HepG2 (cell line): ENCODE measurements at regions of chr3 and their contacts with region 1.

Region 1: GRCh38 chr3:22089284-22089683 is 338.3 kb upstream of the ZNF385D start:
- DNase-seq: peak; percentile 23
- ATAC-seq: peak; percentile 70
- H3K4me3 ChIP-seq: no peak overlapping the region
- H3K27ac ChIP-seq: no peak overlapping the region
- H3K4me1 ChIP-seq: no peaks in the 10 kb centered on the region
- H3K27me3 ChIP-seq: no peaks in the 10 kb centered on the region
- CTCF ChIP-seq: peak; percentile 67
- EP300 ChIP-seq: no peak
- POLR2A ChIP-seq: no peak
- RAD21 ChIP-seq: peak; percentile 16; the same call in 1 of the 2 replicates

Region 2: GRCh38 chr3:21995079-21995607 is 94.1 kb before region 1 on chr3:
- CTCF ChIA-PET with region 1: no interaction called
- POLR2A ChIA-PET with region 1: no interaction called
- in situ Hi-C with region 1: no loop called
- intact Hi-C with region 1: no loop called
- DNase-seq: no peak
- ATAC-seq: no peak
- H3K4me3 ChIP-seq: no peak overlapping the region
- H3K27ac ChIP-seq: no peak overlapping the region
- H3K4me1 ChIP-seq: no peaks in the 10 kb centered on the region
- H3K27me3 ChIP-seq: no peaks in the 10 kb centered on the region
- CTCF ChIP-seq: no peak
- EP300 ChIP-seq: no peak
- POLR2A ChIP-seq: no peak
- RAD21 ChIP-seq: no peak

Region 3: DNA sequence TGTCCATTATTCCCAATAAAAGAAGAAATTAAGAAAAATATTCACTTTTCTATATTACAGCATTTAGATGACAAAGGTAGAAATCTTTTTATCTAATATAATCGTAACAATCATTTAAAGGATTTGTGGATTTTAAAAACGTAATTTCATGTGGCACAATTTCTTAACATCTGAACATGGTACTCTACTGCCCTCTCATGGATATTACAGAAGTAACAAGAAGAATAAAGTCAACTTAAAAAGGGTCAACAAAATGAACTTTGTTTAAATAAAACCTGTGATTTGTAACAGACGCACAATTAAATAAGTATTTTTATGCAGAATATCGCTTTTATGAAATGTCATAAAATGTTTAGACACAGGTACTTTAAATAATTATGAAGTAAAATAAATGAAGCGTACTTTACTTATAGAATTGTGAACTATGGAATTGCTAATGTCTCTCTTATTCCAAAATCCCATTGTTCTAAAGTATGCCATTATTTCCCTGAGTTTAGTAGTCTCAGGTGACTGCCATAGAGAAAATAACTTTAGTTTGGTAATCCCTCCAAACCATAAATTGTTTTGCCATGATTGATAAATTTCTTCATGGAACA is 28.6 kb after region 1 on chr3:
- CTCF ChIA-PET with region 1: interaction called, 5 read pairs
- POLR2A ChIA-PET with region 1: no interaction called
- in situ Hi-C with region 1: no loop called
- intact Hi-C with region 1: loop called (anchors 1 kb)
- DNase-seq: peak; percentile 34
- ATAC-seq: no peak
- H3K4me3 ChIP-seq: no peak overlapping the region
- H3K27ac ChIP-seq: no peak overlapping the region
- H3K4me1 ChIP-seq: peaks cover 26% of the 10 kb centered on the region
- H3K27me3 ChIP-seq: no peaks in the 10 kb centered on the region
- CTCF ChIP-seq: peak; percentile 55
- EP300 ChIP-seq: no peak
- POLR2A ChIP-seq: no peak
- RAD21 ChIP-seq: no peak

Region 4: GRCh38 chr3:22555753-22556435 is 466.6 kb after region 1 on chr3:
- CTCF ChIA-PET with region 1: no interaction called
- POLR2A ChIA-PET with region 1: no interaction called
- in situ Hi-C with region 1: no loop called
- intact Hi-C with region 1: loop called (anchors 5 kb)
- DNase-seq: no peak
- ATAC-seq: no peak
- H3K4me3 ChIP-seq: no peak overlapping the region
- H3K27ac ChIP-seq: no peak overlapping the region
- H3K4me1 ChIP-seq: no peaks in the 10 kb centered on the region
- H3K27me3 ChIP-seq: no peaks in the 10 kb centered on the region
- CTCF ChIP-seq: no peak
- EP300 ChIP-seq: no peak
- POLR2A ChIP-seq: no peak
- RAD21 ChIP-seq: no peak

Region 5: DNA sequence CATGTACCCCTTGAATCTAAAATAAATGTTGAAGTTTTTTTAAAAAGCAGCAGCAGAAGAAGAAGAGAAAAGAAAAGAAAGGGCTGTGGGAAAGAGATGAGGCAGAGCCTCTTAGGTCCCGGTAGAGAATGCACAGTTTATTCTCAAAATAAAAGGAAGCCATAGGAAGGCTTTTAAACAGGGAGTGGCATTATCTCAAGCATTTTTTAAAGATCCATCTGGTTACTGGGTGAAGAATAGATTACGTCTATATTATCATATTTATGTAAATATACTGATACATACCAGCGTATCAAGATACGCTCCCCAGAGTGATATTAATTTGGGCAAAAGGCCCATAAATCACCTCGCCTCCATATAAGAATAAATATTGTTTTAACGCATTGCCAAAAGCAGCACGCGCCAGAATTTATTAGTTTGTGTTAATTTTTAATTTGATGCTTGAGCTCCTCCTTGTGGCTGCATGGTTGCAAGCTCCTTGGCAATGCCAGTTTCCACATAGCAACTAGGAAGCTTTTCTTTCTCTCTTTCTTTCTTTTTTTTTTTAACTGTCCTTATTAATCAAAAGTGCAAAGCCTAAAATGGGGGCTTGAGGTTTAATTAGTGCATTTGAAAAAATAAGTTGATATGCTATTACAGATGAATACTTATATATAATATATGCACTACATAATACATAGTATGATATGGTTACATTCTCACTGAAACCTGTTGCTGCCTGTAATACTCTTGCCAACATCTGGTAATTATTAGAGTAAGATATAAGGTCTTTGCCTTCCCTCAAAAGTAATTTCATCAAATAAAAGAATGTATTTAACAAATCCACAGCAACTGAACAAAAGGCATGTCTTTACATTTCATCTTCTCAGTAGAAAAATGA is 871.1 kb after region 1 on chr3:
- CTCF ChIA-PET with region 1: no interaction called
- POLR2A ChIA-PET with region 1: no interaction called
- in situ Hi-C with region 1: loop called (anchors 25 kb)
- intact Hi-C with region 1: no loop called
- DNase-seq: peak; percentile 12
- ATAC-seq: no peak
- H3K4me3 ChIP-seq: no peak overlapping the region
- H3K27ac ChIP-seq: no peak overlapping the region
- H3K4me1 ChIP-seq: no peaks in the 10 kb centered on the region
- H3K27me3 ChIP-seq: no peaks in the 10 kb centered on the region; a peak in 1 of 5 replicates
- CTCF ChIP-seq: peak; percentile 51
- EP300 ChIP-seq: no peak
- POLR2A ChIP-seq: no peak
- RAD21 ChIP-seq: no peak